ENCODE measurements at regions of chr14 and their contacts with region 1.

Region 1: DNA sequence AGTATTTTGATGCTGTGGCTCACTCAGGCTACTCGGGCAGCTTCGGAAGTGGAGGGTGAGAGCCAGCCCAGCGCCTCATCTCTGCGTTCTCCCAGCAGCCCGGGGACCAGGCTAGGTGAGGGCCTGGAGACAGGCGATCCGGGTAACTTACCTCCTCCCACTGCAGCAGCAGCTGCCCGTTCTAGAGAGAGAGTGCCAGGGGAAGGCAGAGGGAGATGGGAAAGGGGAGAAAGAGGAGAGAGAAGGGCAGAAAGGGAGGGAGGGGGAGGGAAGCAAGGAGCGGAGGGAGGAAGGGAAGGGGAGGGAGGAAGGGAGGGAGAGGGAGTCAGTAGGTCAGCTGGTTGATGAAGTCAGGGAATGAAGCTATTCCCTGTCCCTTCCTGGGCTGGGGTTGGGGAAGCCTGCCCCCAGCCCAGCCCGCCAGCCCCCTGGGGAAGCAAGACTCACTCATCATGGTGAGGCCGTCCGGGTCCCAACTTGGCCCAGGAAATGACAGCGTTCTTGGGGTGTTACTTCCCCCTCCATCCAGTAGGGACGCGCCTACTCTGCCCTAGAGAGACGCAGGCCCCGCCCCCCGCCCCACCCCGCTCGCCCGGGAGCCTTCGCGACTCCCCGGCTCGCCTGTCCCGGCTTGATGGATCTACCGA is at the start of gene IFI27L2:
- DNase-seq: peak; percentile 49 to 83
- ATAC-seq: peak; percentile 93
- H3K4me3 ChIP-seq: peak within 1 kb of the TSS; percentile 59
- H3K4me3 Mint-ChIP-seq: peak within 1 kb of the TSS; percentile 91
- H3K27ac ChIP-seq: peak within 1 kb of the TSS; percentile 49
- H3K27ac Mint-ChIP-seq: peak within 1 kb of the TSS; percentile 76 to 91
- H3K4me1 ChIP-seq: peaks cover 14% of the 10 kb centered on the region
- H3K4me1 Mint-ChIP-seq: peaks cover 21 to 22% of the 10 kb centered on the region in 2 donors
- H3K27me3 ChIP-seq: peaks cover 2% of the 10 kb centered on the region
- H3K27me3 Mint-ChIP-seq: peaks cover 7 to 16% of the 10 kb centered on the region in 2 donors
- CTCF ChIP-seq: no peak
- total RNA-seq, gene IFI27L2: 36.3 to 55.1 (median 39.8) TPM

Region 2: DNA sequence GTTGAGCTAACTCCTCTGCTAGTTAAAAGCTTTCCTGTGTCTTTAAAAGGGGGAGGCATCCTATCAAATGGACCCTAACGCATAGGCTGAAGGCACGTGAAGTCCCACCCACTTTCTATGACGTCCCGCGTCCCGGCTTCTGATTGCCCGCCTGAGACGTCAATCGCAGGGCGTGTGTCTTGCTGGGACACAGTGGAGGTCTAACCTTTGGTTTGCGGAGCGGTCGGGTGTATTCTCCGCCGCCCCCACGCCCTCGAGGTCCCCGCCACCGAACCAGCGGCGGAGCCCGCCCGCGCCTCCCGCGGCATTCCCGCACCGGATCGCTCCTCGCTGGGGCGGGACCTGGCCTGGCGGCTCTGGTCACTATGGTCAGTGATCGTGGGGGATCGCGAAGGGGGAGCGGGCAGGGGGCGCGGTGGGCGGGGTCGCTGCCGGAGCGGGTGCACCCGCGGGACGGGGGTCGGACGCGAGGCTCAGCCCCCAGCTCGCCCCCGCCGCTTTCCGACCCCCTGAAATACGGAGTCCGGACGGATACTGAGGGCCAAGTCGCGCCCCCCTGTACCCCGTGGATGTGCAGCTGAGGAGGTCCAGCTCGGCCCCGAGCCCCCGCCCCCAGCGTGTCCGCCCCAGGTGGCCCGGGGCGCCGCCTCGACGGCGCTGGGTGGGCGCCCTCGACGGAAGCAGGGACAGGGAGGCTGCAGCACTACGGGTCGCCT is 102.9 kb before region 1 on chr14 and contains the start of gene OTUB2:
- intact Hi-C with region 1: loop called (anchors 1 kb)
- DNase-seq: peak; percentile 96 to 98
- ATAC-seq: peak; percentile 100
- H3K4me3 ChIP-seq: peak within 1 kb of the TSS; percentile 22
- H3K4me3 Mint-ChIP-seq: peak within 1 kb of the TSS; percentile 80
- H3K27ac ChIP-seq: no peak within 1 kb of the TSS
- H3K27ac Mint-ChIP-seq: peak within 1 kb of the TSS in 1 of 2 donors; percentile 64
- H3K4me1 ChIP-seq: peaks cover 12% of the 10 kb centered on the region
- H3K4me1 Mint-ChIP-seq: peaks cover 6 to 9% of the 10 kb centered on the region in 2 donors
- H3K27me3 ChIP-seq: no peaks in the 10 kb centered on the region
- H3K27me3 Mint-ChIP-seq: peaks cover 23 to 31% of the 10 kb centered on the region in 2 donors
- CTCF ChIP-seq: no peak
- total RNA-seq, gene OTUB2: 0.09 to 0.13 TPM in 2 of 3 donors, not detected in the other

Region 3: GRCh38 chr14:94180655-94181271 is 51.5 kb after region 1 on chr14:
- intact Hi-C with region 1: loop called (anchors 2 kb)
- DNase-seq: peak in 1 of 2 donors; percentile 75
- ATAC-seq: peak; percentile 82 to 87 (median 83)
- H3K4me3 ChIP-seq: no peak overlapping the region
- H3K4me3 Mint-ChIP-seq: peak overlapping the region; percentile 2
- H3K27ac ChIP-seq: no peak overlapping the region
- H3K27ac Mint-ChIP-seq: peak overlapping the region in 1 of 2 donors; percentile 13
- H3K4me1 ChIP-seq: no peaks in the 10 kb centered on the region
- H3K4me1 Mint-ChIP-seq: peaks cover 4 to 9% of the 10 kb centered on the region in 2 donors
- H3K27me3 ChIP-seq: peaks cover 35% of the 10 kb centered on the region
- H3K27me3 Mint-ChIP-seq: peaks cover 39 to 74% of the 10 kb centered on the region in 2 donors
- CTCF ChIP-seq: peak; percentile 75

Measured in natural killer cell (primary cell).